ENCODE measurements at regions of chr6 and their contacts with region 1.

Region 1: DNA sequence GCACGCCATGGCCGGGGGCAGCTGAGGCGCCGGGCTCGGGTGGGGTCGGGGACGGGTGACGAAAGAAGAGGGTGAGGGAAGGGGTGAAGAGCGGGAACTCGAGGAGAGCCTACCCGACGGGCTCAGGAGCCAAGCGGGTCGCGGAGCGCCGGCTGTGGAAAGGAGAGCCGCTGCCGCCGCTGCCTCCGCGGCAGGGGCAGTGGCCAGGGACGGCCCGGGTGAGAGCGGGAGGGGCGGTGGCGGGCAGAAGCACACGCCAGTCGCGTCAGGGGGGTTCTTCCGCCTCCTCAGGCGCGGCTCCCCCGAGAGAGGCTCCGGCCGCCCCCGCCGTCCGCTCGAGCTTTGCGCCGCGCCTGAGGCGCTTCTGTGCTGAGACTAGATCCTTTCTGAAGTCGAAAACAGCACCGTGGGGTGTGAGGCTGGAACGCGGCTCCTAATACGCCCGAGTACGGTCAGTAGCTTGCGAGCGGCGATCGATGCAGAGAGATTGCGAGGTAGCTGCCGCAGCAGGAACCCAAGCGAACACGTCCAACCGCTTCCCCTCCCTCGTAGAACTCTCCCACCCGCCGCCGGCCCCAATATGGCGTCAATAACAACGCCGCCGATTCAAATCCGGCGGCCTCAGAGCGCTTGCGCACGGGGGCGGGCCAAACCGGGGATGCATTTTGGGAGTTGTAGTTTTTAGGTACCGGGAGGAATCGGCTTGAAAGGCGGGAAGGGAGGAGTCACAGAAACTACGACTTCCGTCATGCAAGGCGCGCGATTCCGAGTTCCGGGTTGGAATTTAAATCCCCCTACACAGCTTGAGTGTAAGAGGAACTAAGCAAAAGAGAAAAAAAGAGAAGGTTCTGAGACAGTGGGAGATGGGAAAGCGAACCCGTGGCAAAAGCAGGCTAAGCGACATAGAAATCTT is at the start of gene AKIRIN2:
- DNase-seq: peak; percentile 94 to 99 (median 96)
- ATAC-seq: peak; percentile 85
- H3K4me3 ChIP-seq: peak within 1 kb of the TSS; percentile 72 to 96
- H3K4me3 Mint-ChIP-seq: peak within 1 kb of the TSS; percentile 92
- H3K27ac ChIP-seq: peak within 1 kb of the TSS; percentile 93
- H3K27ac Mint-ChIP-seq: peak within 1 kb of the TSS; percentile 96
- H3K4me1 ChIP-seq: peaks cover 17% of the 10 kb centered on the region
- H3K4me1 Mint-ChIP-seq: peaks cover 43% of the 10 kb centered on the region
- H3K27me3 ChIP-seq: no peaks in the 10 kb centered on the region
- H3K27me3 Mint-ChIP-seq: no peaks in the 10 kb centered on the region
- CTCF ChIP-seq: no peak
- total RNA-seq, gene AKIRIN2: 79.4 to 82.4 TPM

Region 2: GRCh38 chr6:87049779-87050178 is 652.2 kb before region 1 on chr6:
- CTCF ChIA-PET with region 1: no interaction called
- POLR2A ChIA-PET with region 1: no interaction called
- intact Hi-C with region 1: no loop called
- DNase-seq: no peak
- ATAC-seq: no peak
- H3K4me3 ChIP-seq: no peak overlapping the region
- H3K4me3 Mint-ChIP-seq: no peak overlapping the region
- H3K27ac ChIP-seq: no peak overlapping the region
- H3K27ac Mint-ChIP-seq: no peak overlapping the region
- H3K4me1 ChIP-seq: no peaks in the 10 kb centered on the region
- H3K4me1 Mint-ChIP-seq: no peaks in the 10 kb centered on the region
- H3K27me3 ChIP-seq: no peaks in the 10 kb centered on the region
- H3K27me3 Mint-ChIP-seq: peaks cover 6% of the 10 kb centered on the region
- CTCF ChIP-seq: no peak

Region 3: DNA sequence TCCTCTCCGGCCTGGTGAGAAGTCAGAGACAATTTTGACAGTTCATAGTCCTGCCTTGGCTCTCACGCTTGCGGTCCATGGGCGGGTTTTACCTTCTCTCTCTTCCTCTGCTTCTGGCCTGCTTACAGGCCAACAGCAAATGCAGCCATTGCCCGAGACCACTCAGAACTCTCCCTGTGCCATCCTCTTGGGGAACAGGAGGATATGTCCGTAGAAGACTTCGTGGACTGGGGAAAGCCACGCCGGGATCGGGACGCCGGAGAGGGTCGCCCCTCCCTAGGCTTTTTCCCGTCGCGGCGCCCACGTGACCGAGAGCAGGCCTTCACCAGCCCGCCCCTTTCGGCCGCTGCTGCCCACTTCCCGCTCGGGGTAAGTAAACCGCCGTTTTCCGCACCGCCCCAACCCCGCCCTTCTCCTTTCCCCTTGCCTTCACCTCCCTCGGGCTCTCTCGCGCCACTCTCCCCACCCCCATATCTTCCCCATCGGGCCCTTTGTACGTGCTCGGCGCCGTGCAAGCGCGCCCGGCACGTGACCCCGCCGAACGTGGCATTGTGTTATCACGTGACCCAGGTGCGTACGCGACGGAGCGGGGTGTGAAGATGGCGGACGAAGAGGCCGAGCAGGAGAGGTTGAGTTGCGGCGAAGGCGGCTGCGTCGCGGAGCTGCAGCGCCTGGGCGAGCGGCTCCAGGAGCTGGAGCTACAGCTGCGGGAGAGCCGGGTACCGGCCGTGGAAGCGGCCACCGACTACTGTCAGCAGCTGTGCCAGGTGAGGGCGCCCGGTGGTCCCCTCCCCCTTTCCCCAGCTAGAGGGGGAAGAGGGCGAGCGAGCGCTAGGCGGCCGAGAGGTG is 546.7 kb before region 1 on chr6 and contains the start of gene ZNF292:
- CTCF ChIA-PET with region 1: no interaction called
- POLR2A ChIA-PET with region 1: interaction called, 5 read pairs
- intact Hi-C with region 1: loop called (anchors 1 to 5 kb)
- DNase-seq: peak; percentile 85 to 98 (median 95)
- ATAC-seq: peak; percentile 67
- H3K4me3 ChIP-seq: peak within 1 kb of the TSS; percentile 73 to 80
- H3K4me3 Mint-ChIP-seq: peak within 1 kb of the TSS; percentile 96
- H3K27ac ChIP-seq: peak within 1 kb of the TSS; percentile 85 to 95
- H3K27ac Mint-ChIP-seq: peak within 1 kb of the TSS; percentile 98
- H3K4me1 ChIP-seq: peaks cover 54% of the 10 kb centered on the region
- H3K4me1 Mint-ChIP-seq: peaks cover 58% of the 10 kb centered on the region
- H3K27me3 ChIP-seq: no peaks in the 10 kb centered on the region
- H3K27me3 Mint-ChIP-seq: no peaks in the 10 kb centered on the region
- CTCF ChIP-seq: no peak
- total RNA-seq, gene ZNF292: 82.6 to 87.6 TPM

Region 4: GRCh38 chr6:87393022-87393622 is 308.8 kb before region 1 on chr6:
- CTCF ChIA-PET with region 1: no interaction called
- POLR2A ChIA-PET with region 1: no interaction called
- intact Hi-C with region 1: loop called in 1 of 2 experiments (anchors 5 kb)
- DNase-seq: peak in 7 of 9 experiments; percentile 8 to 79 (median 29)
- ATAC-seq: peak; percentile 99
- H3K4me3 ChIP-seq: no peak overlapping the region
- H3K4me3 Mint-ChIP-seq: no peak overlapping the region
- H3K27ac ChIP-seq: no peak overlapping the region
- H3K27ac Mint-ChIP-seq: no peak overlapping the region
- H3K4me1 ChIP-seq: no peaks in the 10 kb centered on the region
- H3K4me1 Mint-ChIP-seq: peaks cover 3% of the 10 kb centered on the region
- H3K27me3 ChIP-seq: no peaks in the 10 kb centered on the region
- H3K27me3 Mint-ChIP-seq: no peaks in the 10 kb centered on the region
- CTCF ChIP-seq: peak; percentile 72

Region 5: GRCh38 chr6:87472525-87473418 is 229.2 kb before region 1 on chr6 and contains the start of gene SLC35A1:
- CTCF ChIA-PET with region 1: no interaction called
- POLR2A ChIA-PET with region 1: interaction called, 4 read pairs
- intact Hi-C with region 1: loop called (anchors 1 kb)
- DNase-seq: peak; percentile 73 to 93 (median 86)
- ATAC-seq: peak; percentile 91
- H3K4me3 ChIP-seq: peak within 1 kb of the TSS; percentile 93 to 96
- H3K4me3 Mint-ChIP-seq: peak within 1 kb of the TSS; percentile 99
- H3K27ac ChIP-seq: peak within 1 kb of the TSS; percentile 97 to 98
- H3K27ac Mint-ChIP-seq: peak within 1 kb of the TSS; percentile 100
- H3K4me1 ChIP-seq: peaks cover 15% of the 10 kb centered on the region
- H3K4me1 Mint-ChIP-seq: peaks cover 18% of the 10 kb centered on the region
- H3K27me3 ChIP-seq: no peaks in the 10 kb centered on the region
- H3K27me3 Mint-ChIP-seq: peaks cover 3% of the 10 kb centered on the region
- CTCF ChIP-seq: peak; percentile 20
- total RNA-seq, gene SLC35A1: 4.3 to 4.9 TPM

Region 6: GRCh38 chr6:87656857-87657256 is 45.1 kb before region 1 on chr6:
- CTCF ChIA-PET with region 1: no interaction called
- POLR2A ChIA-PET with region 1: interaction called, 11 read pairs
- intact Hi-C with region 1: loop called in 1 of 2 experiments (anchors 5 kb)
- DNase-seq: no peak
- ATAC-seq: peak; percentile 26
- H3K4me3 ChIP-seq: no peak overlapping the region
- H3K4me3 Mint-ChIP-seq: no peak overlapping the region
- H3K27ac ChIP-seq: no peak overlapping the region
- H3K27ac Mint-ChIP-seq: peak overlapping the region; percentile 50
- H3K4me1 ChIP-seq: peaks cover 6% of the 10 kb centered on the region
- H3K4me1 Mint-ChIP-seq: peaks cover 22% of the 10 kb centered on the region
- H3K27me3 ChIP-seq: no peaks in the 10 kb centered on the region
- H3K27me3 Mint-ChIP-seq: no peaks in the 10 kb centered on the region
- CTCF ChIP-seq: no peak

Region 7: GRCh38 chr6:87742106-87742505 is 40.2 kb after region 1 on chr6:
- CTCF ChIA-PET with region 1: no interaction called
- POLR2A ChIA-PET with region 1: interaction called, 7 read pairs
- intact Hi-C with region 1: loop called in 1 of 2 experiments (anchors 5 kb)
- DNase-seq: peak; percentile 14 to 85 (median 58)
- ATAC-seq: peak; percentile 88
- H3K4me3 ChIP-seq: no peak overlapping the region
- H3K4me3 Mint-ChIP-seq: no peak overlapping the region
- H3K27ac ChIP-seq: peak overlapping the region in 1 of 2 experiments; percentile 59
- H3K27ac Mint-ChIP-seq: peak overlapping the region; percentile 72
- H3K4me1 ChIP-seq: peaks cover 9% of the 10 kb centered on the region
- H3K4me1 Mint-ChIP-seq: peaks cover 35% of the 10 kb centered on the region
- H3K27me3 ChIP-seq: no peaks in the 10 kb centered on the region
- H3K27me3 Mint-ChIP-seq: no peaks in the 10 kb centered on the region
- CTCF ChIP-seq: no peak

Region 8: GRCh38 chr6:89352278-89353117 is 1650.6 kb after region 1 on chr6 and contains the start of gene UBE2J1:
- CTCF ChIA-PET with region 1: no interaction called
- POLR2A ChIA-PET with region 1: no interaction called
- intact Hi-C with region 1: loop called in 1 of 2 experiments (anchors 10 kb)
- DNase-seq: peak; percentile 48 to 87 (median 71)
- ATAC-seq: peak; percentile 81
- H3K4me3 ChIP-seq: peak within 1 kb of the TSS; percentile 58 to 67
- H3K4me3 Mint-ChIP-seq: peak within 1 kb of the TSS; percentile 97
- H3K27ac ChIP-seq: peak within 1 kb of the TSS; percentile 74 to 77
- H3K27ac Mint-ChIP-seq: peak within 1 kb of the TSS; percentile 97
- H3K4me1 ChIP-seq: peaks cover 42% of the 10 kb centered on the region
- H3K4me1 Mint-ChIP-seq: peaks cover 69% of the 10 kb centered on the region
- H3K27me3 ChIP-seq: no peaks in the 10 kb centered on the region
- H3K27me3 Mint-ChIP-seq: no peaks in the 10 kb centered on the region
- CTCF ChIP-seq: no peak
- total RNA-seq, gene UBE2J1: 34.1 to 37.5 TPM

Measured in CD8-positive, alpha-beta T cell (primary cell).